CD8-positive, alpha-beta T cell (primary cell): ENCODE measurements at regions of chr2 and their contacts with region 1.

Region 1: GRCh38 chr2:9843229-9844035 is at the start of gene TAF1B:
- DNase-seq: peak; percentile 53 to 93 (median 84)
- ATAC-seq: peak; percentile 84
- H3K4me3 ChIP-seq: peak within 1 kb of the TSS; percentile 71 to 74
- H3K4me3 Mint-ChIP-seq: peak within 1 kb of the TSS; percentile 93
- H3K27ac ChIP-seq: peak within 1 kb of the TSS; percentile 65 to 84
- H3K27ac Mint-ChIP-seq: peak within 1 kb of the TSS; percentile 90
- H3K4me1 ChIP-seq: peaks cover 20% of the 10 kb centered on the region
- H3K4me1 Mint-ChIP-seq: peaks cover 48% of the 10 kb centered on the region
- H3K27me3 ChIP-seq: no peaks in the 10 kb centered on the region
- H3K27me3 Mint-ChIP-seq: no peaks in the 10 kb centered on the region
- CTCF ChIP-seq: no peak
- total RNA-seq, gene TAF1B: 13.3 to 15.8 TPM

Region 2: GRCh38 chr2:8849327-8849726 is 994.1 kb before region 1 on chr2:
- CTCF ChIA-PET with region 1: no interaction called
- POLR2A ChIA-PET with region 1: no interaction called
- intact Hi-C with region 1: loop called in 1 of 2 experiments (anchors 10 kb)
- DNase-seq: no peak
- ATAC-seq: no peak
- H3K4me3 ChIP-seq: no peak overlapping the region
- H3K4me3 Mint-ChIP-seq: no peak overlapping the region
- H3K27ac ChIP-seq: no peak overlapping the region
- H3K27ac Mint-ChIP-seq: no peak overlapping the region
- H3K4me1 ChIP-seq: no peaks in the 10 kb centered on the region
- H3K4me1 Mint-ChIP-seq: no peaks in the 10 kb centered on the region
- H3K27me3 ChIP-seq: peaks cover 0 to 4% of the 10 kb centered on the region in 2 experiments
- H3K27me3 Mint-ChIP-seq: peaks cover 27% of the 10 kb centered on the region
- CTCF ChIP-seq: no peak

Region 3: GRCh38 chr2:9474361-9474967 is 369.0 kb before region 1 on chr2 and contains the start of gene IAH1:
- CTCF ChIA-PET with region 1: no interaction called
- POLR2A ChIA-PET with region 1: no interaction called
- intact Hi-C with region 1: loop called in 1 of 2 experiments (anchors 10 kb)
- DNase-seq: peak; percentile 58 to 86 (median 74)
- ATAC-seq: peak; percentile 80
- H3K4me3 ChIP-seq: peak within 1 kb of the TSS; percentile 83 to 91
- H3K4me3 Mint-ChIP-seq: peak within 1 kb of the TSS; percentile 84
- H3K27ac ChIP-seq: peak within 1 kb of the TSS; percentile 95 to 97
- H3K27ac Mint-ChIP-seq: peak within 1 kb of the TSS; percentile 90
- H3K4me1 ChIP-seq: peaks cover 18% of the 10 kb centered on the region
- H3K4me1 Mint-ChIP-seq: peaks cover 50% of the 10 kb centered on the region
- H3K27me3 ChIP-seq: no peaks in the 10 kb centered on the region
- H3K27me3 Mint-ChIP-seq: no peaks in the 10 kb centered on the region
- CTCF ChIP-seq: no peak
- total RNA-seq, gene IAH1: 48.2 to 52.5 TPM

Region 4: DNA sequence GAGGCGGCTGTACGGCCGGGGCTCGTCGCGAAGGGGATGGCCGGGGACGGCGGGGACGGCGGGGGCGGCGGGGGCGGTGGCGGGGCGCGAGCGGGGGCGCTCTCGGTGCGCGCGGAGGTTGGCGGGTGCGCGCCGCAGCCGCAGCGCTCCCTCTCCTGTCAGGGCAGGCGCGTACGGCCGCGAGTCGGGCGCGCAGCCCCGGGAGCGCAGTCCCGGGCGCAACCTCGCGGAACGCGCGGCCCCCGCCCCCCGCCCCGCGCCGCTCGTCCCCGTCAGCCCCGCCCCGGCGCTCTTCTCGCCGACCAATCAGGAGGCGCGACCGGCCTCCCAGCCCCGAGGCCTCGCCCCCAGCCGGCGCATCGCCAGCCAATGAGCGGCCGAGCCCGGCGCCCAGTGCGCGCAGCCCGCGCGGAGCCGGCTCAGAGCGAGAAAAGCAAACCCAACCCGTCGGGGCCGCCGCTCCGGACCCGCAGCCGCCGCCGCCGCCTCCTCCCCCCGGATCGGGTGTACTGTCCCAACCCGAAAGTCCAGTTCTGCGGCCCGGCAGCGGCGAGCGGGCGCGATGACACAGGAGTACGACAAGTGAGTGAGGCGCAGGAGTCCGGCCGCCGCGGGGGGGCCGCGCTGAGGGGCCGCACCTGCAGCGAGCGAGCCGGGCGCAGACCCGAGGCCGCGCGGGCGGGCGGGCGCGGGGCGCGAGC is 108.0 kb after region 1 on chr2 and contains the start of gene GRHL1:
- CTCF ChIA-PET with region 1: no interaction called
- POLR2A ChIA-PET with region 1: no interaction called
- intact Hi-C with region 1: loop called (anchors 1 kb)
- DNase-seq: peak; percentile 77 to 96 (median 89)
- ATAC-seq: peak; percentile 94
- H3K4me3 ChIP-seq: peak within 1 kb of the TSS; percentile 52 to 58
- H3K4me3 Mint-ChIP-seq: peak within 1 kb of the TSS; percentile 84
- H3K27ac ChIP-seq: no peak within 1 kb of the TSS
- H3K27ac Mint-ChIP-seq: peak within 1 kb of the TSS; percentile 41
- H3K4me1 ChIP-seq: peaks cover 11% of the 10 kb centered on the region
- H3K4me1 Mint-ChIP-seq: peaks cover 6% of the 10 kb centered on the region
- H3K27me3 ChIP-seq: peaks cover 8% of the 10 kb centered on the region in 2 experiments
- H3K27me3 Mint-ChIP-seq: peaks cover 42% of the 10 kb centered on the region
- CTCF ChIP-seq: no peak
- total RNA-seq, gene GRHL1: 0.76 to 0.86 TPM